Tibial artery (tissue), 4 donors: ENCODE measurements at regions of chr10 and their contacts with region 1.

Region 1: GRCh38 chr10:51422311-51423120 is 276.9 kb downstream of the CSTF2T start:
- DNase-seq: peak; percentile 63 to 70
- H3K4me3 ChIP-seq: no peak overlapping the region
- H3K27ac ChIP-seq: peak overlapping the region; percentile 64 to 72
- H3K4me1 ChIP-seq: peaks cover 0 to 56% (median 7%) of the 10 kb centered on the region in 4 donors
- H3K27me3 ChIP-seq: no peaks in the 10 kb centered on the region
- CTCF ChIP-seq: peak; percentile 71 to 72

Region 2: DNA sequence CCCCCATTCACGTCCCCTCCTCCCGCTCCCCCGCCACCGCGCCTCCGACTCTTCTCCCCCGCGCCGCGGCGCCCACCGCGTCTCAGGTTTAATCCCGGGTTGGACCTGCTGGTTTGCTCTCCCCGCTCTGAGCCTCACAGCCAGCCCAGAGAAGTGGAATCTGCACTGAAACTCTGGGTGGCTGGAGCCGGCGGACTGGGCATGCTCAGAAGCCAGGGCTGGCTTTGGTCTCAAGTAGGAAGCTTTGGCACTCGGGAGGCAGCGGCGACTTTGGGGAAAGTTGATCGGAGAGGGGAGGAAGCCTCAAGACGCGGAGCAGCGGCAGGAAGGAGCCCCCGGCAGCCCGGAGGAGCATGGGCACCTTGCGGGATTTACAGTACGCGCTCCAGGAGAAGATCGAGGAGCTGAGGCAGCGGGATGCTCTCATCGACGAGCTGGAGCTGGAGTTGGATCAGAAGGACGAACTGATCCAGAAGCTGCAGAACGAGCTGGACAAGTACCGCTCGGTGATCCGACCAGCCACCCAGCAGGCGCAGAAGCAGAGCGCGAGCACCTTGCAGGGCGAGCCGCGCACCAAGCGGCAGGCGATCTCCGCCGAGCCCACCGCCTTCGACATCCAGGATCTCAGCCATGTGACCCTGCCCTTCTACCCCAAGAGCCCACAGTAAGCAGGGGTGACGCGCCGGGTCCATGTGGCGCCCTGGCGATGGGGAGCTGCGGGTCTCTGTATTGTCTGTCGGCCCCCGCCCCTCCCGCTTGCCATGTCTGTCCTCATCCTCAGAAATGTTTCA is 348.1 kb before region 1 on chr10 and contains the start of gene PRKG1:
- intact Hi-C with region 1: loop called (anchors 10 kb)
- DNase-seq: peak; percentile 84 to 88
- H3K4me3 ChIP-seq: peak within 1 kb of the TSS; percentile 71 to 86
- H3K27ac ChIP-seq: peak within 1 kb of the TSS; percentile 82 to 92
- H3K4me1 ChIP-seq: peaks cover 0 to 57% (median 8%) of the 10 kb centered on the region in 4 donors
- H3K27me3 ChIP-seq: no peaks in the 10 kb centered on the region
- CTCF ChIP-seq: no peak

Region 3: DNA sequence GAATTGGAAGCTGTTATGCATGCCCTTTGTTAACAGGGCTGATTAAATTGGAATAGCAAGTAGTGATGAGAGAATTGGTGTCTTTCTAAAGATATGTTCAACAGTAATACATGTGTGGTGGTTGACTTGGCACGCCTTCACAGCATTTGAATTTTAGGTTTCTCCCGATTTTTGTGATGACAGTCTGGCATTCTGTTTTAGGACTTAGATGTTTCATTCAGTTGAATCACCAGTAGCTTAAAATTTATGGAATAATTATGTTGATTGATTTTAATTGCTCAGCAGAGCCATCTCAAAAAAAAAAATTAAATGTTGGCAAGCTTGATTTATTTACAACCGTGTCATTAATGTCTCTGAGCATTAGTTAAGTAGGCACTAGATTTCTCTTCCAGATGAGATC is 57.2 kb after region 1 on chr10:
- intact Hi-C with region 1: no loop called
- DNase-seq: no peak
- H3K4me3 ChIP-seq: no peak overlapping the region
- H3K27ac ChIP-seq: no peak overlapping the region
- H3K4me1 ChIP-seq: peaks cover 0 to 33% (median 6%) of the 10 kb centered on the region in 4 donors
- H3K27me3 ChIP-seq: no peaks in the 10 kb centered on the region
- CTCF ChIP-seq: no peak

Region 4: GRCh38 chr10:51821045-51821444 is 398.5 kb after region 1 on chr10:
- intact Hi-C with region 1: no loop called
- DNase-seq: no peak
- H3K4me3 ChIP-seq: no peak overlapping the region
- H3K27ac ChIP-seq: no peak overlapping the region
- H3K4me1 ChIP-seq: peaks cover 0 to 32% (median 0%) of the 10 kb centered on the region in 4 donors
- H3K27me3 ChIP-seq: no peaks in the 10 kb centered on the region
- CTCF ChIP-seq: no peak